Activated CD4-positive, alpha-beta T cell treated with anti-CD3 and anti-CD28 coated beads, Interleukin-2, amount 10 ng/mL, durations not matched to agents 24 days and 14 days (primary cell): ENCODE measurements at regions of chr20 and their contacts with region 1.

Region 1: GRCh38 chr20:47379433-47380150 is 23.1 kb upstream of the ZMYND8 start:
- DNase-seq: no peak
- H3K4me3 Mint-ChIP-seq: peak overlapping the region; percentile 30
- H3K27ac Mint-ChIP-seq: peak overlapping the region; percentile 80
- H3K4me1 Mint-ChIP-seq: peaks cover 24% of the 10 kb centered on the region
- H3K27me3 Mint-ChIP-seq: no peaks in the 10 kb centered on the region

Region 2: DNA sequence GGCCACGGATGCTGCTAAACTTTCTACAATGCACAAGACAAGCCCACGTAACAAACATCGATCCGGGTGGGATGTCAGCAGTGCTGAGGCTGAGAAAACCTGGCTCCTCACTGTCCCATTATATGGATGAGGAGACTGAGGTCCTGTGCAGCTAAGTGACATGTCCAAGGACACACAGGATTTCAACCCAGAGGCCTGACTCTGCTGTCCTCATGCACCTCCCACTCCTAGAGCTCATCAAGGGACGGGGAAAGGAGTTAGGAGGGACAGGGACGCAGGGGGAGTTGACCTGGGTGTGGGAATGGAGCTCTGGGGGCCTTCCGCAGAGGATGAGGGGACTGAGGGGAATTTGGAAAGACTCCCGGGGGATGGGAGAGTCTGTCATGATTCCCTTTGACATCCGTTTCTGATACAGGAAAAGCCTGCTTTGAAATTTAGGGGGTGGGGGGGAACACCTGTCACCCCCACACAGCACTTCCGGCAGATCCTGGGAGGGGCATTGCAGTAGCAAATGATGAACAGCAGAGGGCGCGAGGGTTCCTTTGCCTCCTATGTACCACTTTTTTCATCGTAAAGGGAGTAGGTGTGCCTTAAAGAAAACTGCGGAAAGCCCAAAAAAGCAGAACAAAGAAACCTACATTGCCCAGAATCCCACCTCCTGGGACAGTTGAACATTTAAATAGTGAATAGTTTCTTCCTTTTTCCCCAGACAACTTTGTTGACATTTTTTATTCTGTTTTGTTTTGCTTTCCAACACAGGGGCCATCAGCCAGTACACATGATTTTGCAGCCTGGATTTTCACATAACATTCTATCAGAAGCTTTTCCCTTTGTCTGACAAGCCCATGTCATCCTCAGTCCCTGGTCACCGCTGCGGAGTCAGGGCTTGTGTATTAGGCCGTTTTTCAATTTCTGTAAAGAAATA is 621.6 kb before region 1 on chr20:
- intact Hi-C with region 1: loop called (anchors 5 kb)
- DNase-seq: peak; percentile 89
- H3K4me3 Mint-ChIP-seq: no peak overlapping the region
- H3K27ac Mint-ChIP-seq: no peak overlapping the region
- H3K4me1 Mint-ChIP-seq: peaks cover 4% of the 10 kb centered on the region
- H3K27me3 Mint-ChIP-seq: peaks cover 5% of the 10 kb centered on the region

Region 3: DNA sequence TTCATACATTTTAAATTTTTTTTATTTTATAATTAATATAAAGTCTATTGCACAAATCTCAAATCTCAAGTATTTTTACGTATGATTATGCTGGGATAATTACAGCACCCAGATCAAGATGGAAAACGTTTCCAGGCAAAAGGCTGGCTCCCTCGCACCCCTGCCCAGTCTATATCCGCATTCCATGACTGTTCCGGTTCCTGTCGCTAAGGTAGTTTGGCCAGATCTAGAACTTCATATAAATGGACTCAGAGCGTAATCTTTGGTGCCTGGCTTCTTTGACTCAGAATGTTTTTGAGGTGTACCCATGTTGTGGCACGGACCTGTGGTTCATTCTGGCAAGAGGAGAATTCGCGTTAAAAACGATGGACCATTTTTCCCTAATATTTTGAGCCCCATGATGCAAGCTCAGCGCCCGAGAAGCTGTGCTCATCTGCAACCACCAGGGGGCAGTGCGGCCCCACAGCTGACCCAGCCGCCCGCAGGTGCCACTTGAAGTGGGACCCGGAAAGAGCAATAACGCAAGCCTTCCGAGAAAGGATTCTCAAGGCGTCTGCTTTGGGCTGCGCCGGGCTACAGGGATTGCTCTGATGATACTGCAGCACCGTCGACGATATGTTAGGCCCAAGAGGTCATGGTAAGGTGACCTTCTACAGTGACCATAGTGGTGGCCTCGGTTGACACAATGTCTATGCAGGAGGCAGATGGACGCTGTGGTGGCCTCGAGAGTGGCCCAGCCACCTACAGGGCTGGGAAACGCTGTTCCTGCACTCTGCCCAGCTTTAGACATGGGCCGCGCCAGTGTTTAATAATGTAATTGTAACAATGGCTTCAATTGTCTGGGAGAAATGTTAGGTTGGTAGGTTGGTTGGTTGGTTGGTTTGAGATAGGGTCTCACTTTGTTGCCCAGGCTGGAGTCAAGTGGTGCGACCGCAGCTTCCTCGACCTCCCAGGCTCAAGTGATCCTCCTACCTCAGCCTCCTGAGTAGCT is 183.2 kb before region 1 on chr20:
- intact Hi-C with region 1: loop called (anchors 1 kb)
- DNase-seq: peak; percentile 93
- H3K4me3 Mint-ChIP-seq: peak overlapping the region; percentile 7
- H3K27ac Mint-ChIP-seq: peak overlapping the region; percentile 65
- H3K4me1 Mint-ChIP-seq: peaks cover 8% of the 10 kb centered on the region
- H3K27me3 Mint-ChIP-seq: peaks cover 5% of the 10 kb centered on the region

Region 4: GRCh38 chr20:47356526-47357295 is 22.9 kb before region 1 on chr20 and contains the start of gene ZMYND8:
- intact Hi-C with region 1: loop called (anchors 2 kb)
- DNase-seq: peak; percentile 99
- H3K4me3 Mint-ChIP-seq: peak within 1 kb of the TSS; percentile 91
- H3K27ac Mint-ChIP-seq: peak within 1 kb of the TSS; percentile 99
- H3K4me1 Mint-ChIP-seq: peaks cover 30% of the 10 kb centered on the region
- H3K27me3 Mint-ChIP-seq: no peaks in the 10 kb centered on the region
- total RNA-seq, gene ZMYND8: 38.1 and 40.0 TPM in 2 replicates